ENCODE measurements at regions of chr10 and their contacts with region 1.

Region 1: GRCh38 chr10:132434405-132435005 is 37.5 kb downstream of the PWWP2B start:
- DNase-seq: peak; percentile 66 to 85 (median 80)
- H3K4me3 ChIP-seq: peak overlapping the region in 3 of 7 experiments; percentile 10 to 48 (median 39)
- H3K27ac ChIP-seq: peak overlapping the region in 1 of 2 experiments; percentile 16
- H3K4me1 ChIP-seq: peaks cover 2 to 43% (median 24%) of the 10 kb centered on the region in 4 experiments
- H3K27me3 ChIP-seq: no peaks in the 10 kb centered on the region

Region 2: GRCh38 chr10:132407814-132408278 is 26.7 kb before region 1 on chr10:
- CTCF ChIA-PET with region 1: interaction called, 17 read pairs
- POLR2A ChIA-PET with region 1: no interaction called
- DNase-seq: peak in 2 of 3 donors; percentile 58 to 72
- H3K4me3 ChIP-seq: peak overlapping the region in 5 of 7 experiments; percentile 26 to 63 (median 46)
- H3K27ac ChIP-seq: peak overlapping the region in 1 of 2 experiments; percentile 34
- H3K4me1 ChIP-seq: peaks cover 3 to 60% (median 55%) of the 10 kb centered on the region in 4 experiments
- H3K27me3 ChIP-seq: no peaks in the 10 kb centered on the region